BJ (cell line): ENCODE measurements at regions of chrX and their contacts with region 1.

Region 1: DNA sequence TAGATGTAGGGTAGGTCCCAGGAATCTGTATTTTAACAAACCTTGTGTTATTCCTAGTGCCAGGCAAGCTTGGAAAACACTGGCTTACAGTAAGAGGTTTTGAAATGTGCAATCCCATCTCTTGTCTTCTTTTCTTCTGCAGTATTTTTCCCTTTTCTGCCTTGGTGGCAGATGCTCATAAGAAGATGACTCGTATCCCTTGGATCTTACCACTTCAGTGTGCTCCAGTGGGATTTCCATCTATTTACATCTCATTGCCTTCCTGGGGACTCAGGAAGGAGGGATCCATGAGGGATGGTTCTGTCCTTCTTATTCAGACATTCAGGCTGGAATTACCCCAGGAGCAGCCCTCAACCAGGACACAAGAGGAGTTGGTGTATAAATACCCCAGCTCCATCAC is 136.6 kb downstream of the NHS start:
- DNase-seq: no peak
- H3K4me3 ChIP-seq: no peak overlapping the region
- H3K27me3 ChIP-seq: no peaks in the 10 kb centered on the region
- CTCF ChIP-seq: no peak

Region 2: DNA sequence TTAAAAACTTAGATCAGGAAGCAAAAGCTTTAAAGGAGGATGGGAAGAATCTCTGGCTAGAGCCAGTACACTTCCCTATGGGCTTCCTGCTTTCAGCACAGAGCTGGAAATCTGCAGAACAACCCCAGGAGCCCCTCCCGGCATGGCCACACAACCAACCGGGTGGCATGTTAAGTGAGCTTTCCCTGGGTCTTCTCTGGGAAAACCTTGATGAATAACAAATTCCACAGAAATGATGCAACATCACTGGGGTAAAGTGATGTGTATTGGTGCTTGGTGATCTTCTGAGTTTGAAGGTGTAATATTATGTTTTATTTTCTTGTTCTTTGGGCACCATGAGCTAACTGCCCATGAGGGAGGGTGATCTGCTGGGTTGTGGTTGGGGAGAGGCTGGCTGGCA is 114.5 kb before region 1 on chrX:
- CTCF ChIA-PET with region 1: no interaction called
- POLR2A ChIA-PET with region 1: no interaction called
- DNase-seq: no peak
- H3K4me3 ChIP-seq: no peak overlapping the region
- H3K27me3 ChIP-seq: no peaks in the 10 kb centered on the region
- CTCF ChIP-seq: no peak

Region 3: DNA sequence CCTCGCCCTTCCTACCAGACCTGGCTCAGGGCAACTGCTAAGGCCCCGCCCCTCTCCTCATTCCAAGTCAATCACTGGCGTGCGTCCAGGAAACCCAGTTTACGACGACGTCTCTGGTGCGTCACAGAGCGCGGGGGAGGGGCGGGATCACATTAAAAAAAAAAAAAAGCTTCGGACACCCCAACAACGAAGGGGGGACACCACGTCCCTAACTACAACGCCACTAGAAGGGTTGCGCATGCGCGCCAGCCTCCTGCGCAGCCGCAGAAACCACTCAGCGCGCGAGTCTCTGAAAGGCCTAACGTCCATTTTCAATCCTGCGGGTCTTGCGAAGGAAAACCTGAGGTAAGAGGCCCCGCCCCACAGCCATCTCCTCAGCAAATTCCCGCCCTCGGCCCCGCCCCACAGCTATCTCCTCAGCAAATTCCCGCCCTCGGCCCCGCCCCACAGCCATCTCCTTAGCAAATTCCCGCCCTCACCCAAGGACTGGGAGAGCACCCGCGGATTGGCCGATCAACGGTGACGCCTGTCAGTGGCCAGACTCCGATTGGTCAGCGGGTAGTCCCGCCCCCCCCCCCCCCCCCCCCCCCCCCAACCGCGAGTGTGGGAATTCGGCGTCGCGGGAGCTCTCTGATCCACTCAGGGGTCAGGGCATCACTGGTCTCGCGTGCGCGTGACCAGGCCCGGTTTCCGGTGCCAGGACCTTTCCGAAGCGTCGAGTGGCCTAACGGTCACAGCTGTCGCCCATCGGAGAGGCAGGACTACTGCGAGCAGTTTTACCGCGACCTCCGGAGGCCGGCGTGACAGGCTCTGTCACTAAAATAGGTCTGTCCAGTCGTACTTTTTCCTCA is 225.5 kb after region 1 on chrX and contains the start of gene SCML1:
- CTCF ChIA-PET with region 1: no interaction called
- POLR2A ChIA-PET with region 1: interaction called, 19 read pairs
- DNase-seq: peak; percentile 88
- H3K4me3 ChIP-seq: peak within 1 kb of the TSS; percentile 71
- H3K27me3 ChIP-seq: no peaks in the 10 kb centered on the region
- CTCF ChIP-seq: no peak
- polyA plus RNA-seq, gene SCML1: 15.0 and 16.7 TPM in 2 replicates